ENCODE measurements at regions of chr1 and their contacts with region 1.

Region 1: GRCh38 chr1:205335643-205336091 is 14.1 kb upstream of the NUAK2 start:
- DNase-seq: peak; percentile 84
- ATAC-seq: peak; percentile 92
- H3K4me3 Mint-ChIP-seq: no peak overlapping the region
- H3K27ac Mint-ChIP-seq: no peak overlapping the region
- H3K4me1 Mint-ChIP-seq: peaks cover 6% of the 10 kb centered on the region
- H3K27me3 Mint-ChIP-seq: peaks cover 6% of the 10 kb centered on the region
- CTCF ChIP-seq: peak; percentile 98

Region 2: GRCh38 chr1:205020466-205020865 is 315.2 kb before region 1 on chr1:
- CTCF ChIA-PET with region 1: no interaction called
- POLR2A ChIA-PET with region 1: no interaction called
- intact Hi-C with region 1: no loop called
- DNase-seq: no peak
- ATAC-seq: no peak
- H3K4me3 Mint-ChIP-seq: no peak overlapping the region
- H3K27ac Mint-ChIP-seq: no peak overlapping the region
- H3K4me1 Mint-ChIP-seq: no peaks in the 10 kb centered on the region
- H3K27me3 Mint-ChIP-seq: no peaks in the 10 kb centered on the region
- CTCF ChIP-seq: no peak

Region 3: GRCh38 chr1:205321164-205321958 is 14.3 kb before region 1 on chr1 and contains the start of gene NUAK2:
- CTCF ChIA-PET with region 1: interaction called, 52 read pairs
- POLR2A ChIA-PET with region 1: interaction called, 3 read pairs
- intact Hi-C with region 1: no loop called
- DNase-seq: peak; percentile 85
- ATAC-seq: peak; percentile 76
- H3K4me3 Mint-ChIP-seq: peak within 1 kb of the TSS; percentile 78
- H3K27ac Mint-ChIP-seq: peak within 1 kb of the TSS; percentile 82
- H3K4me1 Mint-ChIP-seq: peaks cover 56% of the 10 kb centered on the region
- H3K27me3 Mint-ChIP-seq: no peaks in the 10 kb centered on the region
- CTCF ChIP-seq: peak; percentile 34
- total RNA-seq, gene NUAK2: 1.9 TPM

Region 4: DNA sequence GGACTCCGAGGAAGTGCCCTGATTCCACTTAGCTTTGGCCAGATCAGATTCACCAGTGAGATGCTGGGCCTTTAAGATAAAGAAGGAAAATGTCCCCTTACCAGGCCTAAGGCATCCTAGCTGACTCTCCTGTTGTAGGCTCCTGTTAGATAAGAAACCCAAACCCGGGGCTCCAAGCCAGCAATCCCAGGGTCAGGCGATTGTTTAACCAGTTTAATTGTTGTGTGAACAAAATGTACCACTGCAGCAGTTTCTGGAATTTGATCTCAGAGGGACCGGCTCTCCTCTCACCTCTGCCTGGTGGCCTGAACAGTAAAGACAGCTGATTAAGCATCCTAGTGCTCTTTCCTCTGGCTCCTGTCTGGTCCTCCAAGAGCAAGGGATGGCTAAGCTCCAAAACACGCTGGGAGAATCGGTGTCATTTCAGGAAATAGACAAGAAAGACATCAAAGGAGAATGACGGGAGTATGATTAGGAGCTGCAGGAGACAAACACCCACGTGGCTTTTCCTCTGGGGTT is 30.3 kb after region 1 on chr1:
- CTCF ChIA-PET with region 1: interaction called, 11 read pairs
- POLR2A ChIA-PET with region 1: no interaction called
- intact Hi-C with region 1: no loop called
- DNase-seq: no peak
- ATAC-seq: no peak
- H3K4me3 Mint-ChIP-seq: no peak overlapping the region
- H3K27ac Mint-ChIP-seq: no peak overlapping the region
- H3K4me1 Mint-ChIP-seq: no peaks in the 10 kb centered on the region
- H3K27me3 Mint-ChIP-seq: no peaks in the 10 kb centered on the region
- CTCF ChIP-seq: no peak